Cardiac septum (tissue), 1 donor: ENCODE measurements at regions of chr3 and their contacts with region 1.

Region 1: GRCh38 chr3:46078712-46079400 is 51.6 kb upstream of the XCR1 start:
- DNase-seq: peak; percentile 91

Region 2: GRCh38 chr3:45841757-45842491 is 236.9 kb before region 1 on chr3 and contains the start of gene LZTFL1:
- intact Hi-C with region 1: loop called (anchors 10 kb)
- DNase-seq: peak; percentile 94
- total RNA-seq, gene LZTFL1: 6.0 TPM

Region 3: DNA sequence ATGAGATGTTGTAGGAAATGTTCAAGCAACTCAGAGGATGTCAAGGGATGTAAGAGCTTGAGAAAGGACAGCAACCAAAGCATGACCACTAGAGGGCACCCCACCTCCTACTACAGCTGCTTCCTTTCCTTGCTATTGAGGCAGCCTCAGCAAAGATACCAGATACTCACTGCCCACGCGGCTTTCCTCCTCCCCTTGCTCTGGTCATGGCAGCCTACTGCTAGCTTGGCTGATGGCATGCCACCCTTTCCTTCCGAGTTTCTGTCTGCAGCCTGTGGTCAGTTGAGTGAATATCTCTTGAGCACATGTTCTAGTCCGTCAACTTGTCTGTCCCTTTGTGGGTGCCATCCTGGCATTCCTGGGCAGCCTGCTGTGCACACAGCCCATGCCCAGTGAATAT is 140.0 kb before region 1 on chr3:
- intact Hi-C with region 1: loop called (anchors 1 kb)
- DNase-seq: peak; percentile 84

Region 4: GRCh38 chr3:46284981-46285683 is 206.3 kb after region 1 on chr3:
- intact Hi-C with region 1: no loop called
- DNase-seq: no peak